ENCODE measurements at regions of chr6 and their contacts with region 1.

Region 1: GRCh38 chr6:96787846-96788580 is 49.3 kb downstream of the GPR63 start:
- DNase-seq: no peak
- H3K4me3 ChIP-seq: no peak overlapping the region
- H3K27ac ChIP-seq: no peak overlapping the region
- H3K4me1 ChIP-seq: peaks cover 0 to 5% of the 10 kb centered on the region in 2 donors
- H3K27me3 ChIP-seq: no peaks in the 10 kb centered on the region
- CTCF ChIP-seq: no peak

Region 2: DNA sequence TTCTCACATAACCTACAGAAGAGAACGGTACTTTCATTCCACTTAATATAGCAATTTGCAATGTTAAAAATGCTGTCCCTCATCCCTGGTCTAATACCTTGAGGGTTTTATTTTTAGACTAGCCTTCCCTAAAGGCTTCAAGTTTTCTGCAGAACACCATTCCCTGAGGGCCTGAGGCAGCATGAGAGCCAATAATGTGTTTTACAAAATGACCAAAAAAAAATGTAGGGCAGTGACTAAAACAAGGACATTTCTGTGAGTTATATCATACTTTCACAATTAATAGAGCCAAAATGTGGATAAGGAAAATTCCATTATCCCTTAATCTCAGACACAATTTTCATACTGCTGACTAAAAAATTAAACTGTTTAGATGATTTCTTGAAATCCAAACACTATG is 26.6 kb after region 1 on chr6:
- intact Hi-C with region 1: loop called (anchors 2 kb)
- DNase-seq: no peak
- H3K4me3 ChIP-seq: no peak overlapping the region
- H3K27ac ChIP-seq: no peak overlapping the region
- H3K4me1 ChIP-seq: peaks cover 0 to 11% of the 10 kb centered on the region in 2 donors
- H3K27me3 ChIP-seq: no peaks in the 10 kb centered on the region
- CTCF ChIP-seq: no peak